Ascending aorta (tissue), 2 donors: ENCODE measurements at regions of chrX and their contacts with region 1.

Region 1: GRCh38 chrX:39736216-39737211 is 361.2 kb downstream of the BCOR start:
- DNase-seq: peak; percentile 80 to 95
- H3K4me3 ChIP-seq: no peak overlapping the region
- H3K27ac ChIP-seq: peak overlapping the region; percentile 73 to 75
- H3K4me1 ChIP-seq: peaks cover 8 to 9% of the 10 kb centered on the region in 2 donors
- H3K27me3 ChIP-seq: no peaks in the 10 kb centered on the region
- CTCF ChIP-seq: no peak

Region 2: GRCh38 chrX:39755143-39756032 is 18.9 kb after region 1 on chrX:
- intact Hi-C with region 1: loop called (anchors 2 kb)
- DNase-seq: peak; percentile 74 to 95
- H3K4me3 ChIP-seq: no peak overlapping the region
- H3K27ac ChIP-seq: peak overlapping the region; percentile 87 to 91
- H3K4me1 ChIP-seq: peaks cover 3 to 21% of the 10 kb centered on the region in 2 donors
- H3K27me3 ChIP-seq: no peaks in the 10 kb centered on the region
- CTCF ChIP-seq: no peak

Region 3: GRCh38 chrX:39779952-39780783 is 43.7 kb after region 1 on chrX:
- intact Hi-C with region 1: no loop called
- DNase-seq: no peak
- H3K4me3 ChIP-seq: no peak overlapping the region
- H3K27ac ChIP-seq: no peak overlapping the region
- H3K4me1 ChIP-seq: no peaks in the 10 kb centered on the region
- H3K27me3 ChIP-seq: peaks cover 4% of the 10 kb centered on the region
- CTCF ChIP-seq: no peak

Region 4: GRCh38 chrX:39808471-39808917 is 72.0 kb after region 1 on chrX:
- intact Hi-C with region 1: loop called (anchors 2 kb)
- DNase-seq: peak in 1 of 2 donors; percentile 75
- H3K4me3 ChIP-seq: no peak overlapping the region
- H3K27ac ChIP-seq: peak overlapping the region; percentile 50 to 68
- H3K4me1 ChIP-seq: peaks cover 7 to 13% of the 10 kb centered on the region in 2 donors
- H3K27me3 ChIP-seq: no peaks in the 10 kb centered on the region
- CTCF ChIP-seq: no peak